ENCODE measurements at regions of chr10 and their contacts with region 1.

Region 1: GRCh38 chr10:116170815-116171250 is 102.2 kb downstream of the GFRA1 start:
- DNase-seq: peak; percentile 96
- H3K4me3 ChIP-seq: no peak overlapping the region
- H3K27ac ChIP-seq: no peak overlapping the region
- H3K4me1 ChIP-seq: peaks cover 23% of the 10 kb centered on the region
- H3K27me3 ChIP-seq: peaks cover 61% of the 10 kb centered on the region
- CTCF ChIP-seq: no peak

Region 2: GRCh38 chr10:115936926-115937767 is 233.7 kb before region 1 on chr10:
- CTCF ChIA-PET with region 1: no interaction called
- POLR2A ChIA-PET with region 1: no interaction called
- intact Hi-C with region 1: loop called (anchors 5 kb)
- DNase-seq: peak; percentile 49
- H3K4me3 ChIP-seq: no peak overlapping the region
- H3K27ac ChIP-seq: no peak overlapping the region
- H3K4me1 ChIP-seq: peaks cover 55% of the 10 kb centered on the region
- H3K27me3 ChIP-seq: peaks cover 6% of the 10 kb centered on the region
- CTCF ChIP-seq: no peak

Region 3: GRCh38 chr10:116014871-116015582 is 155.8 kb before region 1 on chr10:
- CTCF ChIA-PET with region 1: no interaction called
- POLR2A ChIA-PET with region 1: no interaction called
- intact Hi-C with region 1: no loop called
- DNase-seq: no peak
- H3K4me3 ChIP-seq: no peak overlapping the region
- H3K27ac ChIP-seq: no peak overlapping the region
- H3K4me1 ChIP-seq: no peaks in the 10 kb centered on the region
- H3K27me3 ChIP-seq: peaks cover 18% of the 10 kb centered on the region
- CTCF ChIP-seq: no peak

Region 4: GRCh38 chr10:116260599-116260998 is 89.8 kb after region 1 on chr10:
- CTCF ChIA-PET with region 1: no interaction called
- POLR2A ChIA-PET with region 1: no interaction called
- intact Hi-C with region 1: loop called (anchors 2 kb)
- DNase-seq: peak; percentile 59
- H3K4me3 ChIP-seq: no peak overlapping the region
- H3K27ac ChIP-seq: no peak overlapping the region
- H3K4me1 ChIP-seq: peaks cover 9% of the 10 kb centered on the region
- H3K27me3 ChIP-seq: peaks cover 88% of the 10 kb centered on the region
- CTCF ChIP-seq: no peak